ENCODE measurements at regions of chr2 and their contacts with region 1.

Region 1: GRCh38 chr2:218395797-218396687 is 3.6 kb upstream of the CTDSP1 start:
- DNase-seq: peak; percentile 96
- H3K4me3 Mint-ChIP-seq: peak overlapping the region; percentile 83
- H3K27ac Mint-ChIP-seq: peak overlapping the region; percentile 93
- H3K4me1 Mint-ChIP-seq: peaks cover 34% of the 10 kb centered on the region
- H3K27me3 Mint-ChIP-seq: no peaks in the 10 kb centered on the region

Region 2: GRCh38 chr2:218269899-218270720 is 125.9 kb before region 1 on chr2 and contains the starts of genes AAMP and PNKD:
- CTCF ChIA-PET with region 1: interaction called, 20 read pairs
- POLR2A ChIA-PET with region 1: interaction called, 19 read pairs
- DNase-seq: peak; percentile 100
- H3K4me3 Mint-ChIP-seq: peak within 1 kb of the TSS; percentile 89
- H3K27ac Mint-ChIP-seq: peak within 1 kb of the TSS; percentile 75
- H3K4me1 Mint-ChIP-seq: peaks cover 52% of the 10 kb centered on the region
- H3K27me3 Mint-ChIP-seq: no peaks in the 10 kb centered on the region
- total RNA-seq, gene AAMP: 44.2 to 46.8 TPM
- total RNA-seq, gene PNKD: 30.1 to 31.8 TPM

Region 3: DNA sequence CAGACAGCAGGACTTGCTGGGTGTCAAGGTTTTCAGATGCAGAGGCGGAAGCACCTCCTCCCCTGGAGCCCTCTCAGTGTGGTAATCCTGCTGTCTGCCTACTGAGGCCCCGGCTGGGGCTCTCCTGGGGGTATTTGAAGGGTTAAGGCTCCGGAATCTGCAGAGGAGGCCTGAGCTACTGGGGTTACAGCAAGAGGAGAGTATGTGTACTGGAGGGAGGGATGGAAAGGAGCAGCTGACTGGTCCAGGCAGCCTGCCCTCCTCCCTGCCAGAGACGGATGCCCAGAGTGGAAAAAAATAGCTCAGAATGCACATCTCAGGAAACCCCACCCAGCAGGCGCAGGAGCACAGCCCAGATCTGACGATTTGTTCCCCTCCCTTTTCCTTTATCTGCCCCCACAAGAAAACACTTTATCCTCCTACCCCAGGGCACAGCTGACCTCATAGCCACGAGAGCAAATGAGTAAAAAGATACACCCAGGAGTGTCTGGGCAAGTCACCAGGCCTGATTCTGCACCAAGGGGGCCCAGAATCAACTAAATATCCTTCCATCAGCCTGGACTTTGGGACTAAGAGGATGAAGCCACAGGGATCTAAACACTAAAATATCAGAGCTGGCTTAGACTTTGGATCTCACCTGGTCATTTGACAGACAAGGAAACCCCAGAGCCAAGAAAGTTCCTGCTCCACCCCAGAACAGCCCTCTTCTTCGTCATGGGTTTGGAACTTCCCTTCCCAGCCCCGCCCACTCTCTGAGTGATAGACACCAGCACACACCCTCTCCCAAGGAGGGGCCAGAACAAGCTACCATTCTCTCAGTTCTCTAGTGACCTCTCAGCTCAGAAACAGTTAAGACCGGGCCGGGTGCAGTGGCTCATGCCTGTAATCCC is 109.2 kb before region 1 on chr2:
- CTCF ChIA-PET with region 1: interaction called, 32 read pairs
- POLR2A ChIA-PET with region 1: interaction called, 71 read pairs
- DNase-seq: peak; percentile 87
- H3K4me3 Mint-ChIP-seq: peak overlapping the region; percentile 89
- H3K27ac Mint-ChIP-seq: peak overlapping the region; percentile 89
- H3K4me1 Mint-ChIP-seq: peaks cover 81% of the 10 kb centered on the region
- H3K27me3 Mint-ChIP-seq: no peaks in the 10 kb centered on the region

Region 4: DNA sequence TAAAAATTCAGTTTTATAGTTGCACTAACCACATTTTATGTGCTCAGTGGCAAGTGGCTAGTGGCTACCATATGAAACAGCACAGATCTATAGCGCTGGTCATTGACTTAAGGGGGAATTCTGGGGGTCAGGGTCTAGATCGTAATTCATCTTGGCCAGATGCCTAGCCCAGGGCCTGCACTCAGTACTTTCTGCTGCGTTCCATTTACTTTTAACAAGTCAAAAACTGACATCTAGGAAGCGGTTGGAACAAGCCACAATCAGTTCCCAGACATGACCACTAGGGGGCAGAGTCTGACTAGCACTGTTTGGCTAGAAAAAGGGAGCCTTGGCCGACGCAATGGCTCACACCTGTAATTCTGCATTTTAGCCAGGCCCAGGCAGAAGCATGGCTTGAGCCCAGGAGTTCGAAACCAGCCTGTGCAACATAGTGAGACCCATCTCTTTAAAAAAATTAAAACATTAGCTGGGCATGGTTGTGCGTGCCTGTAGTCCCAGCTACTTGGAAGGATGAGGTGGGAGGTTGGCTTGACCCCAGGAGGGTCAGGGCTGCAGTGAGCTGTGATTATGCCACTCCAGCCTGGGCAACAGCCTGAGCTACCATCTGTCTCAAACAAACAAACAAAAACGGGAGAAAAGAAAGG is 94.7 kb before region 1 on chr2:
- CTCF ChIA-PET with region 1: interaction called, 33 read pairs
- POLR2A ChIA-PET with region 1: interaction called, 25 read pairs
- DNase-seq: peak; percentile 91
- H3K4me3 Mint-ChIP-seq: no peak overlapping the region
- H3K27ac Mint-ChIP-seq: no peak overlapping the region
- H3K4me1 Mint-ChIP-seq: peaks cover 8% of the 10 kb centered on the region
- H3K27me3 Mint-ChIP-seq: no peaks in the 10 kb centered on the region

Region 5: GRCh38 chr2:218367415-218368153 is 28.5 kb before region 1 on chr2:
- CTCF ChIA-PET with region 1: interaction called, 10 read pairs
- POLR2A ChIA-PET with region 1: interaction called, 5 read pairs
- DNase-seq: peak; percentile 82
- H3K4me3 Mint-ChIP-seq: peak overlapping the region; percentile 77
- H3K27ac Mint-ChIP-seq: peak overlapping the region; percentile 74
- H3K4me1 Mint-ChIP-seq: peaks cover 35% of the 10 kb centered on the region
- H3K27me3 Mint-ChIP-seq: peaks cover 7% of the 10 kb centered on the region

Region 6: GRCh38 chr2:218659258-218659987 is 263.4 kb after region 1 on chr2 and contains the starts of genes BCS1L and ZNF142:
- CTCF ChIA-PET with region 1: interaction called, 4 read pairs
- POLR2A ChIA-PET with region 1: interaction called, 19 read pairs
- DNase-seq: peak; percentile 95
- H3K4me3 Mint-ChIP-seq: peak within 1 kb of the TSS; percentile 97
- H3K27ac Mint-ChIP-seq: peak within 1 kb of the TSS; percentile 84
- H3K4me1 Mint-ChIP-seq: peaks cover 43% of the 10 kb centered on the region
- H3K27me3 Mint-ChIP-seq: no peaks in the 10 kb centered on the region
- total RNA-seq, gene BCS1L: 35.0 to 39.8 TPM
- total RNA-seq, gene ZNF142: 41.4 to 41.8 TPM

Measured in activated CD4-positive, alpha-beta memory T cell treated with anti-CD3 and anti-CD28 coated beads, Interleukin-2, amount 10 ng/mL, durations not matched to agents 7 days and 5 days (primary cell).